Activated T-helper 2 cell treated with anti-CD3 and anti-CD28 coated beads, Interferon-gamma antibody, Interleukin-2, Interleukin-4, amounts not matched to agents 10 μg/mL and 5 μg/mL and 100 μg/mL, durations not matched to agents 14 hours and 24 hours and 36 hours (primary cell): ENCODE measurements at regions of chr5 and their contacts with region 1.

Region 1: GRCh38 chr5:59483971-59484472 is 409.5 kb downstream of the PDE4D start:
- DNase-seq: no peak
- H3K4me3 Mint-ChIP-seq: peak overlapping the region; percentile 13
- H3K27ac Mint-ChIP-seq: peak overlapping the region; percentile 79
- H3K4me1 Mint-ChIP-seq: peaks cover 20% of the 10 kb centered on the region
- H3K27me3 Mint-ChIP-seq: peaks cover 4% of the 10 kb centered on the region

Region 2: GRCh38 chr5:59328709-59329296 is 155.2 kb before region 1 on chr5:
- intact Hi-C with region 1: no loop called
- DNase-seq: no peak
- H3K4me3 Mint-ChIP-seq: no peak overlapping the region
- H3K27ac Mint-ChIP-seq: no peak overlapping the region
- H3K4me1 Mint-ChIP-seq: no peaks in the 10 kb centered on the region
- H3K27me3 Mint-ChIP-seq: peaks cover 13% of the 10 kb centered on the region

Region 3: DNA sequence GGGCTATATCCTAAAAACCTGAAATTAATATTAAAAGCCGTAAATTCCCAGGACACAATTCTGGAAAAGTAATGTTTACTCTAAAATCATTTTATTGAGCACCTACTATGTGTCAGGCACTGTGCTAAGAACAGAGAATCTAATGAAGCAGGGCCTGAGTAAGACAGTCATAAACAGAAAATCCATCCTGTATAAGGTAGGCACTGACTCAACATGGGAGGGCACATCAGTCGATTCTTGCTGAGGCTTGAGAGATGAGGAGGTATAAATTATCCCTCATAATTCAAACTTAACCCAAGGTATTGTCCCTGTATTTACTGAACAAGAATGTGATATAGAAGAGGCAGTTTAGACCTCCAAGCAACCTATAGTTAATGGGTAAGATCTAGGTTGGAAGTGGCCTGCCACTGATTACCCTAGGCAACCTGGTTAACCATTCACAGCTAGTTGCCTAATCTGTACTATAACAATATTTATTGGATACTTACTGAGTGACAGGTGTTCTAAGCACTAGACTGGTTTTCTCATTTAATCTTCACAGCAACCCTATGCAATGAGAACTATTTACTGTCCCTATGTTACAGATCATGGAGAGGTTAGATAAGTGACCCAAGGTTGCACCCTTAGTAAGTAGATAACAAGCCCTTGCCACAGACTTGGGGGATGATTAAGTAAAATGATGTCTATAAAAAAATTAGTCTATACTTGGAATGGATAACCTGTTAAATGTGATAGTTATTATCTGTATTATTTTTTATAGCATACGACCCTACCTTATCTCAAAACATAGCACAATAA is 91.8 kb after region 1 on chr5:
- intact Hi-C with region 1: no loop called
- DNase-seq: no peak
- H3K4me3 Mint-ChIP-seq: no peak overlapping the region
- H3K27ac Mint-ChIP-seq: no peak overlapping the region
- H3K4me1 Mint-ChIP-seq: peaks cover 2% of the 10 kb centered on the region
- H3K27me3 Mint-ChIP-seq: peaks cover 12% of the 10 kb centered on the region

Region 4: GRCh38 chr5:59608745-59609144 is 124.7 kb after region 1 on chr5:
- intact Hi-C with region 1: loop called (anchors 1 kb)
- DNase-seq: no peak
- H3K4me3 Mint-ChIP-seq: no peak overlapping the region
- H3K27ac Mint-ChIP-seq: no peak overlapping the region
- H3K4me1 Mint-ChIP-seq: peaks cover 19% of the 10 kb centered on the region
- H3K27me3 Mint-ChIP-seq: peaks cover 30% of the 10 kb centered on the region